ENCODE measurements at regions of chr22 and their contacts with region 1.

Region 1: GRCh38 chr22:19097518-19097917 is 24.7 kb downstream of the DGCR2 start:
- DNase-seq: no peak
- ATAC-seq: no peak
- H3K4me3 Mint-ChIP-seq: no peak overlapping the region
- H3K27ac Mint-ChIP-seq: no peak overlapping the region
- H3K4me1 Mint-ChIP-seq: peaks cover 25% of the 10 kb centered on the region
- H3K27me3 Mint-ChIP-seq: no peaks in the 10 kb centered on the region

Region 2: DNA sequence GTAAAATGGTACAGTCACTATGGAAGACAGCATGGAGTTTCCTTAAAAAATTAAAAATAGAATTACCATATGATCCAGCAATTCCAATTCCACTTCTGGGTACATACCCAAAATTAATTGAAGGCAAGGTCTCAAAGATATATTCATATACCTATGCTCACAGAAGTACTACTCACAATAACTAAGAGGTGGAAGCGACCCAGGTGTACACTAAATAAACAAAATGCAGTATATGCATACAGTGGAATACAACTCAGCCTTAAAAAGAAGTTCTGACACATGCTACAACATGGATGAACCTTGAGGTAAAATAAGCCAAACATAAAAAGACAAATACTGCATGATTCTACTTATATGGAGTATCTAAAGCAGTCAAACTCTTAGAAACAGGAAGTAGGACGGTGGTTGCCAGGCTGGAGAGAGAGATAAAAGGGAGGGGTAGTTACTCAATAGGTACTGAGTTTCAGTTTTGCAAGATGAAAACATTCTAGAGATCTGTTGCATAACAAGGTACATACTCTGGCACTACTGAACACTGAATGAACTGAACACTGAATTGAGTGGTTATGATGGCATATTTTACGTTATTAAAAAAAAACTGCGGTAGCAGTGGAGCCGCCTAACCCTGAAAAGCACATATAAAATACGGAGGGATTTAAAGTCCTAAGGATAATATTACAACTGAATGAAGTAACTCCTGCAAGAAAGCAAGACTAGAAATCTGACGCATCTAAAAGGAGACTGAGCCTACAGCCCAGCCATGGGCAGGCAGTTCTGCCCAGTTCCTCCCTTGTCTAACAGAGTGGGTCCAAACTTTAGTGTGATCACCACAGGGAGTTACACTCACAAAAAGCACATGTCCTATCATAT is 11.9 kb after region 1 on chr22:
- CTCF ChIA-PET with region 1: interaction called, 4 read pairs
- POLR2A ChIA-PET with region 1: no interaction called
- intact Hi-C with region 1: loop called in 1 of 2 experiments (anchors 2 kb)
- DNase-seq: peak; percentile 70
- ATAC-seq: peak; percentile 94
- H3K4me3 Mint-ChIP-seq: peak overlapping the region; percentile 5
- H3K27ac Mint-ChIP-seq: peak overlapping the region; percentile 72
- H3K4me1 Mint-ChIP-seq: peaks cover 68% of the 10 kb centered on the region
- H3K27me3 Mint-ChIP-seq: no peaks in the 10 kb centered on the region

Region 3: DNA sequence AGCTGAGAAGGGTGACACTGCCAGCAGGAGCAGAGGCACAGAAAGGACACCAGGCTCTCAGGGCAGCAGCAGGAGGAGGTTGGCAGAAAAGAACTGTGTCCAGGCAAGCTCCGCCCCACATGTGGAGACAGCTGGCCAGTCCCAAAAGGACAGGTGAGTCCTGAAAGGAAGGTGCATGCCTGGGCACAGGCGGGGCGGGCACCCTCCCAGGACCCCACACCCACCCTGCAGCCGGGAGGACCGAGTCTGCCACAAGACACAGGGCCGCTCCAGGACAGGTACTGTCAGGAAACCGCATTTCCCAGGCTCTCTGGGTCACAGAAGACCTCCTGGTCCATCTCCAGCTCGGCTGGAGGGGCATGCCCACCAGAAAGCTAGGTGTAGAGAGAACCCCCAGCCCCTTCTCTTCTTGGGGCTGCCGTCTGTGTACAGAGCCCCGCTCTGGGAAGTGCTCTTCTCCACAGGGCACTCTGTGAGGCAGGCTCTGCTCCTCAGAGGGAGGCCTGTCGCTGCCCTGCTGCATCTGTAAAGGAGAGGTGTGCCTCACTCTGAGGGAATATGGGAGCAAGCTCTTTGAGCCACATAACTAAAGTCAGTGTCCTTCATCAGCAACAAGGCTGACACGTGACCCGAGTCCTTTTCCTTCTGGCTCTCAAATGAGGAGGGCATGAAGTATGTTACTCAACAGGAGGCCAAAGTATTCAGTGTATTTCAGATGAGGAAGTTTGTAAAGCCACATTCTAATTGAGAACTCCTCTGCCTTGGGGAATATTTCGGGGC is 143.5 kb after region 1 on chr22:
- CTCF ChIA-PET with region 1: no interaction called
- POLR2A ChIA-PET with region 1: no interaction called
- intact Hi-C with region 1: loop called in 1 of 2 experiments (anchors 5 kb)
- DNase-seq: no peak
- ATAC-seq: no peak
- H3K4me3 Mint-ChIP-seq: no peak overlapping the region
- H3K27ac Mint-ChIP-seq: no peak overlapping the region
- H3K4me1 Mint-ChIP-seq: no peaks in the 10 kb centered on the region
- H3K27me3 Mint-ChIP-seq: no peaks in the 10 kb centered on the region